Activated CD4-positive, alpha-beta T cell treated with anti-CD3 and anti-CD28 coated beads for 36 hours (primary cell): ENCODE measurements at regions of chr11 and their contacts with region 1.

Region 1: GRCh38 chr11:69048718-69049489 is at the start of gene TPCN2:
- DNase-seq: peak; percentile 94
- ATAC-seq: peak; percentile 99
- H3K4me3 Mint-ChIP-seq: peak within 1 kb of the TSS; percentile 72
- H3K27ac Mint-ChIP-seq: peak within 1 kb of the TSS; percentile 73
- H3K4me1 Mint-ChIP-seq: peaks cover 22% of the 10 kb centered on the region
- H3K27me3 Mint-ChIP-seq: peaks cover 2% of the 10 kb centered on the region
- total RNA-seq, gene TPCN2: 7.4 to 10.4 TPM

Region 2: DNA sequence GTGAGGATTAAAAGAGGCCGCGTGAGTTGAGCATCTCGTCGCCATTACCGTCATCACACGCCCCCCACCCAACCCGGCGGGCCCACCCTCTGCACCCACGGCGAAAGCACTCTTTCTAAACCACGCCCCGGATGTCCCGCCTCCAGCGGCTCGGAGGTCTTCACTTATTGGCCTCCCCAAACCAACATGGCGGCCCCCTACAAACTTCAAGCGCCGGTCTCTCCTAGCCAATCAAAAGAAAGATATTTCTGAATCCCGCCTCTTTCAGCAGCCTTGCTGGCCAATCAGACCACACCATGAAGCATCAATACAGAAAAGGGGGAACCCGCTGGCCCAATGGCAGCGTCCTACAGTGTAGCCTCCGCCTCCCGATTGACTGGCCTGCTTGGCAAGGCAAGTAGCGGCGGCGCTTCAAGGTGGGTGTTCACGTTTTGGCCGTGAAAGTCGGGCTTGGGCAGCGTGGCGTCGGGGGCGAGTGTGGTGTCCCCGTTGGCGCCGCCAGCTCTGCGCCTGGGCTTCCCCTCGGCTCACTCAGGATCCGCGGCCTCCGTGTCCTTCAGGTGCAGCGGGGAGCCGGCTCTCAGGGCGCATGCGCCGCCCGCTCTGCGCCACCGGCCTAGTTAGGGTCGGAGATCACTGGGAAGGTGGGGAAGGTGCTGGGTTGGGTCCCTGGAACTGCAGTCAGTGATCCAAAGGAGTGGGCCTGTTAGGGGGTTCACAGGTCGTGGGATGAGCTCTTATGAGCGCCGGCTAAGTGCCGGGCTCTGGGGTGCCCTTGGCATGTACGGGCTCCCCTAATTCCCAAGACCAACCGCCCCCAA is 1018.4 kb before region 1 on chr11 and contains the start of gene NDUFS8:
- CTCF ChIA-PET with region 1: no interaction called
- POLR2A ChIA-PET with region 1: no interaction called
- intact Hi-C with region 1: loop called in 1 of 2 experiments (anchors 2 kb)
- DNase-seq: peak; percentile 97
- ATAC-seq: peak; percentile 99
- H3K4me3 Mint-ChIP-seq: peak within 1 kb of the TSS; percentile 96
- H3K27ac Mint-ChIP-seq: peak within 1 kb of the TSS; percentile 95
- H3K4me1 Mint-ChIP-seq: peaks cover 26% of the 10 kb centered on the region
- H3K27me3 Mint-ChIP-seq: no peaks in the 10 kb centered on the region
- total RNA-seq, gene NDUFS8: 108 to 113 TPM

Region 3: DNA sequence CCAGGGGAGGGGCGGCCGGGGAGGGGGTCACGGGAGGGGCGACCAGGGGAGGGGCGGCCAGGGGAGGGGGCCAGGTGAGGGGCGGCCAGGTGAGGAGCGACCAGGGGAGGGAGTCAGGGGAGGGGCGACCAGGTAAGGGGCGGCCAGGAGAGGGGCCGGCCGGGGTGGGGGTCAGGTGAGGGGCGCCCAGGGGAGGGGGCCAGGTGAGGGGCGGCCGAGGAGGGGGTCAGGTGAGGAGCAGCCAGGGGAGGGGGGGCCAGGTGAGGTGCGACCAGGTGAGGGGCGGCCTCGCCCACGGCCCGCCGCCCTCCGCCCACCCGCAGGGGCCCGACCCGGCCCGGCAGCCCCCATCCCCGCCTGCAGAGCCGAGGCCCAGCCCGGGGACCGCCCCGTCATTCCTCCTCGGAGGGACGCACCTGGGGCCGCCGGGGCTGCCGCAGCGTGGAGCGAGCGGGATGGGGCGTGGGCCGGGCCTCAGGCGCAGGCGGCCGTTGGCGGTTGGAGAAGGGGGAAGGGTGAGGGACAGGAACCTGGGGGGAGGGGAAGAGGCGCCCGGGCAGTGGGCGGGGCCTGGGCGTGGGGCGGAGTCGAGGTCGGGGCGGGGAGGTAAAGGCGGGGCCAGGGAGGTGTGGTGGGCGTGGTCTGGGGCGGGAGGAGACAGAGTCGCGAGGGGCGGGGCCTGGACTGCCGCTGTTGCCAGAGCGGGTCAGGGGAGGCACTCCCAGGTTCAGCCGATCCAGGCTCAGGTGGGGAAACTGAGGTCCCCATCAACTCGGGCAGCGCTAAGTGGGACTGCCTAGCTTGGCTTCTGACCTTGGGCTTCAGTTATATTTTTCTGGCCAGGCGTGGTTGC is 297.7 kb before region 1 on chr11 and contains the start of gene TESMIN:
- CTCF ChIA-PET with region 1: interaction called, 3 read pairs
- POLR2A ChIA-PET with region 1: no interaction called
- intact Hi-C with region 1: loop called in 1 of 2 experiments (anchors 1 kb)
- DNase-seq: peak; percentile 97
- ATAC-seq: peak; percentile 96
- H3K4me3 Mint-ChIP-seq: peak within 1 kb of the TSS; percentile 65
- H3K27ac Mint-ChIP-seq: peak within 1 kb of the TSS; percentile 65
- H3K4me1 Mint-ChIP-seq: peaks cover 2% of the 10 kb centered on the region
- H3K27me3 Mint-ChIP-seq: no peaks in the 10 kb centered on the region
- total RNA-seq, gene TESMIN: 2.9 to 3.5 TPM

Region 4: DNA sequence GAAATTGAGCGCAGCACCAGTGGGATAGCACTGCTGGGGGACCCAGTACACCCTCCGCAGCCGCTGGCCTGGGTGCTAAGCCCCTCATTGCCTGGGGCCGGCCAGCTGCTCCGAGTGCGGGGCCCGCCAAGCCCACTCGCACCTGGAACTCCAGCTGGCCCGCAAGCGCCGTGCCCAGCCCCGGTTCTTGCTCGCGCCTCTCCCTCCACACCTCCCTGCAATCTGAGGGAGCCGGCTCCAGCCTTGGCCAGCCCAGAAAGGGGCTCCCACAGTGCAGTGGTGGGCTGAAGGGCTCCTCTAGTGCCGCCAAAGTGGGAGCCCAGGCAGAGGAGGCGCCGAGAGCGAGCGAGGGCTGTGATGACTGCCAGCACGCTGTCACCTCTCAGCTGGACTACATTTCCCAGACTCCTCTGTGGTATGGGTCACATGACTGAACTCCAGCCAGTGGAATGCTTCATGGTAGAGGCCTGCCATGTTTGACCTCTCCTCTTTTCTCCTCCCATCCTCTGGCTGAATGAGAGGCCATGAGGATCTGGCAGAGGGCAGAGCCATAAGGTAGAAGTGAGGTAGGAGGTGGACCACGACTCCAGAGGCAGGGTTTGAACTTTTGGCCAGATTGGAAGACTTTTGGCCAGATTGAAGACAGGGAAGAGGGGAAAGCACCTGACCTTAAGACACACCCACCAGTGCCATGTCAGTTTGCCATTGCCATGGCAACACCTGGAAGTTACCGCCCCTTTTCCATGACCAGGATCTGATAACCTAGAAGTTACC is 74.3 kb before region 1 on chr11:
- CTCF ChIA-PET with region 1: no interaction called
- POLR2A ChIA-PET with region 1: no interaction called
- intact Hi-C with region 1: loop called in 1 of 2 experiments (anchors 1 kb)
- DNase-seq: peak; percentile 51
- ATAC-seq: peak; percentile 96
- H3K4me3 Mint-ChIP-seq: no peak overlapping the region
- H3K27ac Mint-ChIP-seq: peak overlapping the region; percentile 82
- H3K4me1 Mint-ChIP-seq: peaks cover 2% of the 10 kb centered on the region
- H3K27me3 Mint-ChIP-seq: peaks cover 1% of the 10 kb centered on the region

Region 5: DNA sequence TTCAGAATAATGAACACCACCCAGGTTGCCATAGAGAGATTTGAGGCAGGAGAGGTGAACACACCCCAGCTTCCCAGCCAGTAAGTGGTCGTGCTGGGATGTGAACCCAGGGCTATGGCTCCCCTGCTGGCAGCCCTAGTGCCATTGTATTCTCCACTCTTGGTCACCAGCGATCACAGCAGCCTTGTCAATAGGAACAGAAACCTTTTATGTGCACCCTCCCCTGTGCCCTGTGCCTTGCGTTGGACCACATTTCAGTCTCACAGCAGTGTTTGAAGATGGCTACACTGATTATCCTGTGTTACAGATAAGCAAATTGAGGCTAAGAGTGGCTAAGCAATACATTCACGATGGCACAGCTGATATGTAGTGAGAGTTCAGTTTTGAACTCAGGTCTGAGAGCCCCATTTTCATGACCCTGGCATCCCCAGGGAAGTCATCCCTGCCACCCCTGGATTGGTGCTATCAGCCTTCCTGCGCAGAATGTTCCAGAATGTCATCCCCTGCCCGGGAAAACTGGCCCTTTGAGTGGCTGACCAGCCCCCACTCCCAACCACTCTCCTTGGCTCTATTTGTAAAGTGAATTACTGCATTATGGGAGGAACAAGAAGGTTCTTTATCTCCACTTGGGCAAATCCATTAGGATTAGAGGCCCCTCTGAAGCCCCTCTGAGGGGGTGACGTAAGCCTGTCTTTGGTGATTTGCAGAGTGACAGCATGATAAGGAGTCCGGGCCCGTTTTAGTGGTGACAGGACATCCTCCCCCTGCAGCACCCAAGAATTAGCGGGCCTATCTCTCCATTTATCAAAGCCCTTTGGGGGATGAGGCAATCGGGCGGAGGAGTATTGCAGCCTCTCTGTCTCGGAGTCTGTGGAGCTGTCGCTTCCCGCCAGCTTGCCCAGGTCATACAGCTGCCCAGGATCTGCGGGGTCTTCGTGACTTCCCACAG is 137.7 kb after region 1 on chr11:
- CTCF ChIA-PET with region 1: no interaction called
- POLR2A ChIA-PET with region 1: no interaction called
- intact Hi-C with region 1: no loop called
- DNase-seq: no peak
- ATAC-seq: no peak
- H3K4me3 Mint-ChIP-seq: no peak overlapping the region
- H3K27ac Mint-ChIP-seq: no peak overlapping the region
- H3K4me1 Mint-ChIP-seq: no peaks in the 10 kb centered on the region
- H3K27me3 Mint-ChIP-seq: peaks cover 3% of the 10 kb centered on the region

Region 6: DNA sequence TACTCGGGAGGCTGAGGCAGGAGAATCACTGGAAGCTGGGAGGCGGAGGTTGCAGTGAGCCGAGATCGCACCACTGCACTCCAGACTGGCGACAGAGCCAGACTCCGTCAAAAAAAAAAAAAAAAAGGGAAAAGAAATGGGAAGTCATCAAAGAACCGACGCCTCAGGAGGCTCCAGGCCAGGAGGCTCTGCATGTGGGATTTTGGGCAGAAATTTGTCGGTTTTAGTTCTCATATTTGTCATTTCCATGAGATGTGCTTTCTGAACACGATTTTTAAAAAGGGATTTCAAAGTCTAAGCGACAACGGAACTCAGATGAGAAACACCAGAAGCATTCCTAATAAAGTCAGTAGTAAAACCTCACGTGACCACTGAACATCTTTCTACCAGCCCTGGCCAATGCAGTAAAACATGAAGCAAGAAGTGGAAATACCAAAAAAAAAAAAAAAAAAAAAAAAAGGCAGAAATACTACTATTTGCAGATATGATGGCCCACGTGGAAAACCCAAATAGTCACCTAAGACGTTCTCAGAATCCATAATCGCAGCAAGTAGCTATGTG is 627.0 kb after region 1 on chr11:
- CTCF ChIA-PET with region 1: interaction called, 3 read pairs
- POLR2A ChIA-PET with region 1: no interaction called
- intact Hi-C with region 1: loop called in 1 of 2 experiments (anchors 1 kb)
- DNase-seq: no peak
- ATAC-seq: no peak
- H3K4me3 Mint-ChIP-seq: peak overlapping the region; percentile 89
- H3K27ac Mint-ChIP-seq: no peak overlapping the region
- H3K4me1 Mint-ChIP-seq: peaks cover 20% of the 10 kb centered on the region
- H3K27me3 Mint-ChIP-seq: peaks cover 2% of the 10 kb centered on the region

Region 7: GRCh38 chr11:70270104-70270876 is 1221.4 kb after region 1 on chr11 and contains the start of gene PPFIA1:
- CTCF ChIA-PET with region 1: no interaction called
- POLR2A ChIA-PET with region 1: no interaction called
- intact Hi-C with region 1: loop called in 1 of 2 experiments (anchors 2 kb)
- DNase-seq: peak; percentile 97
- ATAC-seq: peak; percentile 95
- H3K4me3 Mint-ChIP-seq: peak within 1 kb of the TSS; percentile 92
- H3K27ac Mint-ChIP-seq: peak within 1 kb of the TSS; percentile 89
- H3K4me1 Mint-ChIP-seq: peaks cover 31% of the 10 kb centered on the region
- H3K27me3 Mint-ChIP-seq: peaks cover 10% of the 10 kb centered on the region
- total RNA-seq, gene PPFIA1: 26.5 to 40.5 TPM